Activated CD4-positive, alpha-beta memory T cell treated with anti-CD3 and anti-CD28 coated beads for 36 hours (primary cell): ENCODE measurements at regions of chr2 and their contacts with region 1.

Region 1: GRCh38 chr2:38508311-38509039 is 94.3 kb downstream of the HNRNPLL start:
- DNase-seq: peak; percentile 89
- H3K4me3 Mint-ChIP-seq: no peak overlapping the region
- H3K27ac Mint-ChIP-seq: no peak overlapping the region
- H3K4me1 Mint-ChIP-seq: no peaks in the 10 kb centered on the region
- H3K27me3 Mint-ChIP-seq: peaks cover 2% of the 10 kb centered on the region

Region 2: GRCh38 chr2:38293152-38293865 is 215.2 kb before region 1 on chr2:
- CTCF ChIA-PET with region 1: interaction called, 20 read pairs
- POLR2A ChIA-PET with region 1: no interaction called
- intact Hi-C with region 1: no loop called
- DNase-seq: no peak
- H3K4me3 Mint-ChIP-seq: no peak overlapping the region
- H3K27ac Mint-ChIP-seq: no peak overlapping the region
- H3K4me1 Mint-ChIP-seq: peaks cover 4% of the 10 kb centered on the region
- H3K27me3 Mint-ChIP-seq: peaks cover 6% of the 10 kb centered on the region

Region 3: GRCh38 chr2:38315707-38316333 is 192.7 kb before region 1 on chr2:
- CTCF ChIA-PET with region 1: interaction called, 247 read pairs
- POLR2A ChIA-PET with region 1: interaction called, 4 read pairs
- intact Hi-C with region 1: loop called (anchors 1 kb)
- DNase-seq: no peak
- H3K4me3 Mint-ChIP-seq: no peak overlapping the region
- H3K27ac Mint-ChIP-seq: no peak overlapping the region
- H3K4me1 Mint-ChIP-seq: peaks cover 13% of the 10 kb centered on the region
- H3K27me3 Mint-ChIP-seq: no peaks in the 10 kb centered on the region

Region 4: DNA sequence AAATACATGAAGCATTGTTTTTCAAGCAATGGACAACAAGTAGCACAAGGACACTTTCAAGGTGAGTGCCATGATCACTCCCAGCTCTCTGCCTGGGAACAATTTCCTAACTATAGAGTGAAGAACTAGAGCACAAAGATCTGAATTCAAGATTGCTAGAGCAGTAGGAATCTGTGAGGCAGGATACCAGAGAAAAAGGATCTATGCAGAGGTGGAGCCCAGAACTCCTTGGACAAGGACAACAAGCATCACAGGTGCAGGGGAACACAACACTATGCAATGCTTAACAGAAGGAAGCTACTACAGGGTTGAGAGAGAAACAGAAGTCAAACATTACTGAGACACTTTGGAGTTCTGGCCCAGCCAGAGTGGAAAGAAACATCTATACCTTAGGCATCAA is 156.1 kb before region 1 on chr2:
- CTCF ChIA-PET with region 1: interaction called, 12 read pairs
- POLR2A ChIA-PET with region 1: no interaction called
- intact Hi-C with region 1: no loop called
- DNase-seq: no peak
- H3K4me3 Mint-ChIP-seq: no peak overlapping the region
- H3K27ac Mint-ChIP-seq: no peak overlapping the region
- H3K4me1 Mint-ChIP-seq: peaks cover 19% of the 10 kb centered on the region
- H3K27me3 Mint-ChIP-seq: no peaks in the 10 kb centered on the region

Region 5: GRCh38 chr2:38370664-38371063 is 137.8 kb before region 1 on chr2:
- CTCF ChIA-PET with region 1: interaction called, 32 read pairs
- POLR2A ChIA-PET with region 1: no interaction called
- intact Hi-C with region 1: no loop called
- DNase-seq: no peak
- H3K4me3 Mint-ChIP-seq: no peak overlapping the region
- H3K27ac Mint-ChIP-seq: no peak overlapping the region
- H3K4me1 Mint-ChIP-seq: peaks cover 38% of the 10 kb centered on the region
- H3K27me3 Mint-ChIP-seq: no peaks in the 10 kb centered on the region

Region 6: GRCh38 chr2:38465789-38466127 is 42.7 kb before region 1 on chr2:
- CTCF ChIA-PET with region 1: interaction called, 8 read pairs
- POLR2A ChIA-PET with region 1: no interaction called
- intact Hi-C with region 1: loop called (anchors 5 kb)
- DNase-seq: peak; percentile 23
- H3K4me3 Mint-ChIP-seq: no peak overlapping the region
- H3K27ac Mint-ChIP-seq: no peak overlapping the region
- H3K4me1 Mint-ChIP-seq: peaks cover 9% of the 10 kb centered on the region
- H3K27me3 Mint-ChIP-seq: peaks cover 6% of the 10 kb centered on the region

Region 7: DNA sequence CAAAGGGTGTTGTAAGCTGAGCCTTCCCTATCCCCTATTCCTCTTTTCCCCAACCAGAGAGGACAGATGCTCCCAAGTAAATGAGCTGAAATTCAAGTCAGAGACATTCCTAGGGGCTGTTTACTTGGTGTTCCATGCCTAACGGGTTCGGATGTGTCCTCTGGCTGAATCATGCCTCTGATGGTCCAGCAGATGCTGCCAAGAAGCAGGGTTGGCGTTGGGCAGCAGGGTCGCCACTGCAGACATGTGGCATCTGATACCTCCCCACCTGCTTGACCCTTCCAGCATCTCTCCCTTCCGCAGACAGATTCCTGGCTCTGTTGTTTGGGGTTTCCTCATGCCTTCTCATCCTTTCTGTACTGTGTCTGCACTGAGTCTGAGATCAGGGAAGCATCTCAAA is 14.1 kb before region 1 on chr2:
- CTCF ChIA-PET with region 1: interaction called, 14 read pairs
- POLR2A ChIA-PET with region 1: no interaction called
- intact Hi-C with region 1: no loop called
- DNase-seq: no peak
- H3K4me3 Mint-ChIP-seq: no peak overlapping the region
- H3K27ac Mint-ChIP-seq: no peak overlapping the region
- H3K4me1 Mint-ChIP-seq: no peaks in the 10 kb centered on the region
- H3K27me3 Mint-ChIP-seq: no peaks in the 10 kb centered on the region

Region 8: GRCh38 chr2:38557981-38558380 is 49.5 kb after region 1 on chr2:
- CTCF ChIA-PET with region 1: no interaction called
- POLR2A ChIA-PET with region 1: no interaction called
- intact Hi-C with region 1: no loop called
- DNase-seq: no peak
- H3K4me3 Mint-ChIP-seq: no peak overlapping the region
- H3K27ac Mint-ChIP-seq: no peak overlapping the region
- H3K4me1 Mint-ChIP-seq: peaks cover 5% of the 10 kb centered on the region
- H3K27me3 Mint-ChIP-seq: no peaks in the 10 kb centered on the region